Activated CD4-positive, alpha-beta memory T cell treated with anti-CD3 and anti-CD28 coated beads for 36 hours (primary cell): ENCODE measurements at regions of chr1 and their contacts with region 1.

Region 1: GRCh38 chr1:171984850-171985485 is 143.7 kb downstream of the DNM3 start:
- DNase-seq: no peak
- H3K4me3 Mint-ChIP-seq: no peak overlapping the region
- H3K27ac Mint-ChIP-seq: no peak overlapping the region
- H3K4me1 Mint-ChIP-seq: no peaks in the 10 kb centered on the region
- H3K27me3 Mint-ChIP-seq: peaks cover 1% of the 10 kb centered on the region

Region 2: DNA sequence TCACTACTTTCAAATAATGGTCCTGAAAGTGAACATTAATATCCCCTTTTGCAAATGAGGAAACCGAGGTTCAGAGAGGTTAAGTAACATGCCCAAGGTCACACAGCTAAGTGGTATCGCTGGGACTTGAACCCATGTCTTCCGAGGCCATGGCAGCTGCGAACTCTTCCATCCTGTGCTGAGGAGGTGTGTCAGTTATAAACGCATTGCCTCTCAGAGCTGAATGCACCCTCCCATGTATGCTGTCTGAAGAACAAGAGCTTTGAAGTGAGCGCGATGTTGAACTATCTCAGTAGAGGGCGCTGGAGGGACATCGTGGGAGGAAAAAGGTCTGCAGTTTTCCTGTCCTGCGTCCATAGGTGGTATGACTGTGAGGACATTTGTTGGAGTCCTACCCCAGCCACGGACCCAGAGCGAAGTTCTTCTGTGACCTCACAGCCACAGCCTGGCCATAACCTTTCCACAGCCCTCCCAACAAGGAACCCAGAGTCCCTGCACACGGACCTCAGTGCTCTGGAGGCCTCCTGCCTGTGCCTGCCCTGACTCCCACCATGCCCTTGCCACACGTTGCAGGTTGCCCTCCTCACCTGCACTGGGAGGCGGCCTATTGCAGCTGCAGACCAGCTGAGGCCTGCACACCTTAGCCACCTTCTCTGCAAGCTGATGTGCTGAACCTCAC is 340.0 kb before region 1 on chr1:
- CTCF ChIA-PET with region 1: interaction called, 59 read pairs
- POLR2A ChIA-PET with region 1: no interaction called
- intact Hi-C with region 1: loop called (anchors 1 kb)
- DNase-seq: peak; percentile 82
- H3K4me3 Mint-ChIP-seq: no peak overlapping the region
- H3K27ac Mint-ChIP-seq: no peak overlapping the region
- H3K4me1 Mint-ChIP-seq: peaks cover 4% of the 10 kb centered on the region
- H3K27me3 Mint-ChIP-seq: no peaks in the 10 kb centered on the region

Region 3: DNA sequence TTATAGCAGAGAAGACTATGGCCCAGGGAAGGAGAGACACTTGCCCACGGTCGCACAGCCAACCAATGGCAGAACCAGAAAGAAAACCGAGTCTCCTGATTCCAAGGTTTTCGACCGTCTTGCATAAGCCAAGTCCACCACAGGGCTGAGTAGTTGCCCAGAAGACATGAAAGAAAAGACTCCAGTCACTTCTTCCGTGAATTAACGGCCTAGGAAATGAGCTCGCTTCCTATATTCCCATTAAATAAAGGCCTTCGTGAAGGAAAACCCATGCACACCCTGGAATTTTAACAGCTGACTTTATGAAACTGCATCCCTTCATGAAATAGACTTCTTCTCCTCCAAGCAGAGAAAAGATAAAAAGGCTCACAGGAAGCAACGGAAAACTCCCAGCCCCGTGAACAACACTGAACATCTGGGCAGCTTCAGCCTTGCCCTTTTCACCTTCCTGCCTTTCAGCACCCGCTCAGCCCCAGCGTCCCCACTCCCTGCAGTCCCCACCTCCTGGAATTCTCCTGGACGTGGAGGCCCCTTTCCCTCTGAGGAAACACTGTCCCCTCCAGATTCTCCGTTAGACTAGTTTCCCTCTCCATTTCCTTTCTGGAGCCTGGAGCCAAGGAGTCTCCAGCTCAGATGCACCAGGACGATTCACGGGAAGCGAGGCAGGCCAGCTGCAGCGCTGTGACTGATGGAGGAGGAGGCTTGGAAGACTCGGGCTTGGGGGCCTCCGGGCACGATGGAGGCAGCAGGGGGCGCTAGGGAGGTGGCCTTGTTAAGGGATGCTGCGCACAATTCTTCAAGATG is 329.8 kb before region 1 on chr1:
- CTCF ChIA-PET with region 1: interaction called, 20 read pairs
- POLR2A ChIA-PET with region 1: no interaction called
- intact Hi-C with region 1: loop called (anchors 2 kb)
- DNase-seq: peak; percentile 90
- H3K4me3 Mint-ChIP-seq: peak overlapping the region; percentile 43
- H3K27ac Mint-ChIP-seq: no peak overlapping the region
- H3K4me1 Mint-ChIP-seq: peaks cover 11% of the 10 kb centered on the region
- H3K27me3 Mint-ChIP-seq: peaks cover 5% of the 10 kb centered on the region

Region 4: GRCh38 chr1:171877701-171878100 is 107.3 kb before region 1 on chr1:
- CTCF ChIA-PET with region 1: no interaction called
- POLR2A ChIA-PET with region 1: no interaction called
- intact Hi-C with region 1: no loop called
- DNase-seq: no peak
- H3K4me3 Mint-ChIP-seq: no peak overlapping the region
- H3K27ac Mint-ChIP-seq: no peak overlapping the region
- H3K4me1 Mint-ChIP-seq: peaks cover 4% of the 10 kb centered on the region
- H3K27me3 Mint-ChIP-seq: no peaks in the 10 kb centered on the region

Region 5: DNA sequence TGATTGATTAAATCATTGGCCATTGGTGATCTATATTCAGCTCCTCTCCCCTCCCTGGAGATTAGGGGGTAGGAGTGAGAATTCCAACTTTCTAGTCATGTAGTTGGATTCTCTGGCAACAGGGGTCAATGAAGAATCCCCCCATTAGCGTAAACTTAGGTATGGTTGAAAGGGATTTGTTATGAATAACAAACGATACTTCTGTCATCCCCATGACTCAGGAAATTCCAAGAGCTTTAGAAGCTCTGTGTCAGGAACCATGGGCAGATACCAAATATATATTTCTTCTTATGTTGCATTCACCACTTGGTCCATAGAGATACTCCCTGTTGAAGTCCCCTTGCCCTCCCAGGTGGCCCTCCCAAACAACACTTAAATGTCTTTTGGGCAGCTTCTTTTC is 19.2 kb before region 1 on chr1:
- CTCF ChIA-PET with region 1: interaction called, 10 read pairs
- POLR2A ChIA-PET with region 1: no interaction called
- intact Hi-C with region 1: no loop called
- DNase-seq: no peak
- H3K4me3 Mint-ChIP-seq: no peak overlapping the region
- H3K27ac Mint-ChIP-seq: no peak overlapping the region
- H3K4me1 Mint-ChIP-seq: peaks cover 2% of the 10 kb centered on the region
- H3K27me3 Mint-ChIP-seq: no peaks in the 10 kb centered on the region

Region 6: DNA sequence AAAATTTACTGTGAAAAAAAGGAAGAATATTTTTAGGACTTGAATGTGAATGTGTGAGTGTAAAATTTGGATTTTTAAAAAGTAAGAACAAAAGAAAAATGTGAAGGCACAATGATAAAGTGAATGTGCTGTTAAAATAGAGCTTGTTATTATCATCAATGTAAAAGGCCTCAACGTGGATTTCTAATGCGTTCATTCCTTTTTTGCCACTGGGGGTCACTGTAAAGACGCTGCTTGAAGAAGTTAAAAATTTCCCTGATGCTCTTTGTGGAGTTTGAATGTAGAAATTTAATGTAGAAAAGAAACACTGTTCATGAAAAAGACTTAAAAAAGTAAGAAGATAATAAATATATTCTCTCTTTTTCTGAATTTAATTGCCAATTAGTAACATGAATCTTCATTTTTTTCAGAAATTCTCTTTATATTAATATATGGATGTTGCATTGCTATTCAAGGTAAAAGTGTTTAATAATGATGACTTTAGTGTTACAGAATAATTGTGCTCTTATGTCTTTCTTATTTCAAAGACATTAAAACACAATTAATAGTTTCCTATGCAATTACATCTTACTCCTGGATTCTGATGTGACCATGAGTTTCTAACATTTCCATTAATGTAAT is 17.9 kb after region 1 on chr1:
- CTCF ChIA-PET with region 1: interaction called, 16 read pairs
- POLR2A ChIA-PET with region 1: no interaction called
- intact Hi-C with region 1: no loop called
- DNase-seq: peak; percentile 25
- H3K4me3 Mint-ChIP-seq: no peak overlapping the region
- H3K27ac Mint-ChIP-seq: no peak overlapping the region
- H3K4me1 Mint-ChIP-seq: no peaks in the 10 kb centered on the region
- H3K27me3 Mint-ChIP-seq: no peaks in the 10 kb centered on the region